Common myeloid progenitor, CD34-positive (primary cell): ENCODE measurements at regions of chr10 and their contacts with region 1.

Region 1: GRCh38 chr10:119445311-119445934 is 97.1 kb downstream of the RGS10 start:
- DNase-seq: peak; percentile 74 to 86 (median 77)
- H3K4me3 ChIP-seq: no peak overlapping the region
- H3K27ac ChIP-seq: no peak overlapping the region
- H3K4me1 ChIP-seq: peaks cover 0 to 2% (median 0%) of the 10 kb centered on the region in 4 experiments
- H3K27me3 ChIP-seq: no peaks in the 10 kb centered on the region

Region 2: GRCh38 chr10:119416855-119417254 is 28.6 kb before region 1 on chr10:
- CTCF ChIA-PET with region 1: interaction called, 13 read pairs
- POLR2A ChIA-PET with region 1: no interaction called
- DNase-seq: peak; percentile 71 to 83 (median 75)
- H3K4me3 ChIP-seq: no peak overlapping the region
- H3K27ac ChIP-seq: no peak overlapping the region
- H3K4me1 ChIP-seq: peaks cover 0 to 10% (median 4%) of the 10 kb centered on the region in 4 experiments
- H3K27me3 ChIP-seq: peaks cover 0 to 8% (median 0%) of the 10 kb centered on the region in 5 experiments

Region 3: GRCh38 chr10:119428789-119429188 is 16.6 kb before region 1 on chr10:
- CTCF ChIA-PET with region 1: interaction called, 11 read pairs
- POLR2A ChIA-PET with region 1: no interaction called
- DNase-seq: no peak
- H3K4me3 ChIP-seq: no peak overlapping the region
- H3K27ac ChIP-seq: no peak overlapping the region
- H3K4me1 ChIP-seq: peaks cover 0 to 15% (median 12%) of the 10 kb centered on the region in 4 experiments
- H3K27me3 ChIP-seq: peaks cover 0 to under 1% (median 0%) of the 10 kb centered on the region in 5 experiments

Region 4: DNA sequence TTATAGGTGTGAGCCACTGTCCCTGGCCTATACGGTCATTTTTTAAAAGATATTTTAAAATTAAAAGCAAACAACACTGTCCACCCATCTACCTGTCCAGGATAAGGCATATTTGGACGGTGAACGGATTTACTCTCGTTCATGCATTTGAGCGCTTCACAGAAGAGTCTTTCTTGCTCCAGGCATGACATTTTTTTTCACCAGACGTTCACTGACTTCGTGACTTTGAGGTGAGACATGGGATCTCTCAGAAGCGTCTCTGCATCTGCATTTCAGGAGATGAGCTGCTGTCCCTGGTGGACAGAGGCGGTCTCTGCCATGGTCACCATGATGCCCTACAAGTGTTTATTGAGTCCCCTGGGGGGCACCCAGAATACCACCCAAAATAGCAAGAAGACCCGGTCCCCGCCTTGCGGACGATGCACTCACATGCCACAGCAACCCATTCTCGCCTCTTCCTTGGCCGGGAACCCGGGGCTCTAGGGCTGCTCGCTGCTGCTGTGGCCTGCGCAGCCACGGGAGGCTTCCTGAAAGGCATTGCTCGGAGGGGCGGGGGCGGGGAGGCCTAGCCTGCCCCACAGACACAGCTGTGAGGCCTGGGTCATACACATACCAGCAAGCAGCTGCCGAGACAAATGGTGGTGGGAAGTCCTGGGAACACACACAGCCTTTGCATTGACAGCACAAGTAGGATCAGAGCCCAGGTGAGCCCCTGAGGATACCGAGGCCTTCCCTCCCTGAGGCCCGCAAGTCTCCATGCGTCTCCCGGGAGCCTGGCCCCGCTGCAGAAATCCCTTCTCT is 12.7 kb after region 1 on chr10:
- CTCF ChIA-PET with region 1: interaction called, 21 read pairs
- POLR2A ChIA-PET with region 1: interaction called, 3 read pairs
- DNase-seq: no peak
- H3K4me3 ChIP-seq: no peak overlapping the region
- H3K27ac ChIP-seq: no peak overlapping the region
- H3K4me1 ChIP-seq: no peaks in the 10 kb centered on the region
- H3K27me3 ChIP-seq: peaks cover 0 to 1% (median 0%) of the 10 kb centered on the region in 5 experiments

Region 5: DNA sequence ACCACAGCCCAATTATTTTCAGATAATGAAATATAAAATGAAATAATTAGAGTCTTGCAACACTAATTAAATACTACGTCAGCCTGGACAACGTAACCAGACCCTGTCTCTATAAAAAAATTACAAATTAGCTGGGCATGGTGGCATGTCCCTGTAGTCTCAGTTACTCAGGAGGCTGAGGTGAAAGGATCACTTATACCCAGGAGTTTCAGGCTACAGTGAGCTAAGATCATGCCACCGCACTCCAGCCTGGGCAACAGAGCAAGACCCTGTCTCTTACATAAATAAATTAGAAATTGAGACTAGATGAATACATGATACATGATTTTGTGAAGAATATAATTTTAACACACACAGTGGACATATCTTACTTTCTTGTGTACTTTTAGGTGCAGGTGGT is 132.9 kb after region 1 on chr10:
- CTCF ChIA-PET with region 1: no interaction called
- POLR2A ChIA-PET with region 1: no interaction called
- DNase-seq: no peak
- H3K4me3 ChIP-seq: no peak overlapping the region
- H3K27ac ChIP-seq: no peak overlapping the region
- H3K4me1 ChIP-seq: peaks cover 0 to 6% (median 0%) of the 10 kb centered on the region in 4 experiments
- H3K27me3 ChIP-seq: no peaks in the 10 kb centered on the region